Calu3 (cell line): ENCODE measurements at regions of chr3 and their contacts with region 1.

Region 1: GRCh38 chr3:183481582-183481981 is 53.2 kb upstream of the MCF2L2 start:
- DNase-seq: no peak
- H3K4me3 Mint-ChIP-seq: no peak overlapping the region
- H3K27ac Mint-ChIP-seq: no peak overlapping the region
- H3K4me1 Mint-ChIP-seq: no peaks in the 10 kb centered on the region
- H3K27me3 Mint-ChIP-seq: peaks cover 19% of the 10 kb centered on the region
- CTCF ChIP-seq: no peak

Region 2: GRCh38 chr3:183560607-183561006 is 79.0 kb after region 1 on chr3:
- CTCF ChIA-PET with region 1: interaction called, 4 read pairs
- intact Hi-C with region 1: loop called (anchors 5 kb)
- DNase-seq: peak; percentile 42
- H3K4me3 Mint-ChIP-seq: no peak overlapping the region
- H3K27ac Mint-ChIP-seq: no peak overlapping the region
- H3K4me1 Mint-ChIP-seq: no peaks in the 10 kb centered on the region
- H3K27me3 Mint-ChIP-seq: no peaks in the 10 kb centered on the region
- CTCF ChIP-seq: no peak

Region 3: GRCh38 chr3:183766745-183767606 is 285.4 kb after region 1 on chr3:
- CTCF ChIA-PET with region 1: interaction called, 12 read pairs
- intact Hi-C with region 1: no loop called
- DNase-seq: peak; percentile 89
- H3K4me3 Mint-ChIP-seq: no peak overlapping the region
- H3K27ac Mint-ChIP-seq: no peak overlapping the region
- H3K4me1 Mint-ChIP-seq: peaks cover 24% of the 10 kb centered on the region
- H3K27me3 Mint-ChIP-seq: no peaks in the 10 kb centered on the region
- CTCF ChIP-seq: peak; percentile 96

Region 4: GRCh38 chr3:184218814-184219213 is 737.2 kb after region 1 on chr3:
- CTCF ChIA-PET with region 1: no interaction called
- intact Hi-C with region 1: no loop called
- DNase-seq: no peak
- H3K4me3 Mint-ChIP-seq: no peak overlapping the region
- H3K27ac Mint-ChIP-seq: no peak overlapping the region
- H3K4me1 Mint-ChIP-seq: no peaks in the 10 kb centered on the region
- H3K27me3 Mint-ChIP-seq: peaks cover 28% of the 10 kb centered on the region
- CTCF ChIP-seq: no peak